Thyroid gland (tissue), 4 donors: ENCODE measurements at regions of chr17 and their contacts with region 1.

Region 1: GRCh38 chr17:3543453-3543852 is 14.2 kb downstream of the TRPV3 start:
- DNase-seq: no peak
- H3K4me3 ChIP-seq: no peak overlapping the region
- H3K27ac ChIP-seq: no peak overlapping the region
- H3K4me1 ChIP-seq: no peaks in the 10 kb centered on the region
- H3K27me3 ChIP-seq: no peaks in the 10 kb centered on the region
- CTCF ChIP-seq: no peak
- POLR2A ChIP-seq: no peak

Region 2: DNA sequence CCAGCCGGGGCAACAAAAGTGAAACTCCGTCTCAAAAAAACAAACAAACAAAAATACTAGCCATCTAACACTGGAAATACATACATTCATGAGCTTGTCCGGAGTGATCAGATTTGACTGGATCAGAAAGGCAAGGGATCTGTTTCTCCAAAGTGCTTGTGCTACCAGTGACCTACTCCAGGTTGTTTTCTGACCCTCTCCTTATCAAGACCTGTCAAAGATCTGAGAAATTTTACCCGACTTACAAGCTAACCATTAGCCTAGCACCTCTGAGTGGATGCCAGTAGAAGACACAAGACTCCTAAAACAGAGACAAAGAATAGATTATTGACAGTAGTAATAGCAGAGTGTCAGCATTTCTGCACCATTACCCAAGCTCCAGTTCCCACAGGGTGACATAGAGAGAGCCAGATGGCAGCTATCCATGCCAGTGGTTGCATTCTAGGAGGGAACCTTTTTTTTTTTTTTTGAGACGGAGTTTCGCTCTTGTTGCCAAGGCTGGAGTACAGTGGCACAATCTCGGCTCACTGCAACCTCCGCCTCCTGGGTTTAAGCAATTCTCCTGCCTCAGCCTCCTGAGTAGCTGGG is 57.9 kb before region 1 on chr17:
- intact Hi-C with region 1: loop called (anchors 10 kb)
- DNase-seq: no peak
- H3K4me3 ChIP-seq: no peak overlapping the region
- H3K27ac ChIP-seq: no peak overlapping the region
- H3K4me1 ChIP-seq: no peaks in the 10 kb centered on the region
- H3K27me3 ChIP-seq: no peaks in the 10 kb centered on the region
- CTCF ChIP-seq: no peak
- POLR2A ChIP-seq: no peak

Region 3: DNA sequence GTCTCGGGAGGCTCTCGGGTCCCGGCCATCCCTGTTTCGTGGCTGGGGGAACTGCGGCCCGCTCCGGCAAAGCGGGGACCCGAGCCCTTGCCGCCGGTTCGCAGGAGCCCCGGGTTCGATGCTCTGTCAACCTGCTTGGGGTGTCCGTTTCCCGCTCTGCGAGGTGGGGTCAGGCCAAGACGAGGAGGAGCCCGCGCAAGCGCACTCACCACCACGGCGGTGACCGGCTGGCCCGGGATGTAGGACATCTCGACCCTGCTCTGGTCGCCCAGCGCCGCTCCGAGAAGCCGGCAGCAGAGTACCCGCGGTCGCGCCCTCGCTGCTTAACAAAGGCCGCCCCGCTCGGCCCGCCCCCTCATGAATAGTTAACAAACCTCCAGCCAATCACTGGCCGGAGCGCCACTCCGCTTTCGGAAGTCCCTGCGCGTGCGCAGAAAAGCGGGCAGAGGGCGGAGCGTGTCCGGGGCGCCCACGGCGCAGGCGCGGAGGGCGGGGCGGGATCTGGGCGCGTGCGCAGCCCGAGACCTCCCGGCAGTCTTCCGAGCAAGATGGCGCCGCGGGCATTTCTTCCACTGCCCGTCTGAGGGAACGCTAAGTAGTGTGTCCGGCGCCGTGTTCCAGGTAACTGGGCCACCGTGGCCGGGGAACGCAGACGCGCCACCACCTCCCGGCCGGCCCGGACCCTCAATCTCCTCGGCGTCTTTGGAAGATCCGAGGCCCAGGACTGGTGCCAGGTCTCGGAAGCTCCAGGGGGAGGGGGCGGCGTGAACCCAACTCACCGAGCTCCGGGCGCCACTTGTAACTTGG is 125.0 kb after region 1 on chr17 and contains the starts of genes EMC6 and TAX1BP3:
- intact Hi-C with region 1: no loop called
- DNase-seq: peak; percentile 99
- H3K4me3 ChIP-seq: peak within 1 kb of the TSS; percentile 80 to 99 (median 83)
- H3K27ac ChIP-seq: peak within 1 kb of the TSS; percentile 89 to 99 (median 98)
- H3K4me1 ChIP-seq: peaks cover 14 to 25% of the 10 kb centered on the region in 2 donors
- H3K27me3 ChIP-seq: no peaks in the 10 kb centered on the region
- CTCF ChIP-seq: no peak
- POLR2A ChIP-seq: peak; percentile 71 to 96
- total RNA-seq, gene EMC6: 4.1 to 17.3 (median 11.5) TPM
- total RNA-seq, gene TAX1BP3: 62.9 to 151 (median 120) TPM